Activated CD8-positive, alpha-beta memory T cell treated with anti-CD3 and anti-CD28 coated beads, Interleukin-2, amount 10 ng/mL, durations not matched to agents 7 days and 5 days (primary cell): ENCODE measurements at regions of chr2 and their contacts with region 1.

Region 1: DNA sequence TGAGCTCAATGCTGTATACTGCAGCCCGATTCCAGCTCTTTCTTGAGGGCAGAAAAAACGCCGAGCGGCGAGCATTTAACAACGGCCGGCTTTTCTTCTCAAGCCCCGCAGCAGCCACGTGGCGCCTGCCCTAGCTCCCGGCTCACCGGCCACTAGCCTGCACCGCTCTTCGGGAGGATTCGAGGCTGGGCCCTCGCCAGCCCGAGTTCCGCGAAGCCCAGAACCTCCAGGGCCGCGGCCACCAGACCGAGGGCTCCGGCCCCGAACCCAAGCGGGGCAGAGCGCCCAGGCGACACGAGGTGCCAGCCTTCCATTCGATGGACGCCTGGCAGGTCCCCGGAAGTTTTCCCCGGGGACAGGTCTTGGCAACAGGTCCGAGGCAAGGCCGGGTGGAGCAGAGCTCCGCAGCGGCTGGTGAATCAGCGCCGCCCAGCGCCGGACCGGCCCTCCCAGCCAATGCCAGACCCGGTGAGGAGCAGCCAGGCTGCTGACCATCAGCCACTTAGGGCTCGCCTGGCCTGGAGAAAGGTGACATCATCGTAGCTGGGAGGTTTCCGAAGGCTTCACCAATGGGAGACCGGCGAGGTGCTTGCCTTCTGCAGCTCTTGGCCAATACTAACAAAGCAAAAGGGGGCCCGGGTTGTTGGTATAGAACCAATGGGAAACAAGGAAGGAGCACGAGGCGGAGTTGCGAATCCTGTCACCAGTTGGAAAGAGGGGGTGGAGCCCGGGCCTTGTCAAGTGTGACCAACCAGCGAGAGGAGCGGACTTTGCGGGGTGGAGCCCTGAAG is 544 bp upstream of the MXD1 start:
- DNase-seq: peak; percentile 100
- ATAC-seq: peak; percentile 91
- H3K4me3 Mint-ChIP-seq: peak overlapping the region; percentile 78
- H3K27ac Mint-ChIP-seq: peak overlapping the region; percentile 86
- H3K4me1 Mint-ChIP-seq: peaks cover 38% of the 10 kb centered on the region
- H3K27me3 Mint-ChIP-seq: no peaks in the 10 kb centered on the region

Region 2: GRCh38 chr2:69816923-69817542 is 97.3 kb before region 1 on chr2:
- CTCF ChIA-PET with region 1: no interaction called
- DNase-seq: peak; percentile 89
- ATAC-seq: peak; percentile 80
- H3K4me3 Mint-ChIP-seq: no peak overlapping the region
- H3K27ac Mint-ChIP-seq: peak overlapping the region; percentile 17
- H3K4me1 Mint-ChIP-seq: peaks cover 10% of the 10 kb centered on the region
- H3K27me3 Mint-ChIP-seq: no peaks in the 10 kb centered on the region

Region 3: GRCh38 chr2:69902213-69902922 is 12.0 kb before region 1 on chr2:
- CTCF ChIA-PET with region 1: interaction called, 11 read pairs
- DNase-seq: peak; percentile 43
- ATAC-seq: peak; percentile 56
- H3K4me3 Mint-ChIP-seq: peak overlapping the region; percentile 92
- H3K27ac Mint-ChIP-seq: peak overlapping the region; percentile 90
- H3K4me1 Mint-ChIP-seq: peaks cover 47% of the 10 kb centered on the region
- H3K27me3 Mint-ChIP-seq: no peaks in the 10 kb centered on the region

Region 4: DNA sequence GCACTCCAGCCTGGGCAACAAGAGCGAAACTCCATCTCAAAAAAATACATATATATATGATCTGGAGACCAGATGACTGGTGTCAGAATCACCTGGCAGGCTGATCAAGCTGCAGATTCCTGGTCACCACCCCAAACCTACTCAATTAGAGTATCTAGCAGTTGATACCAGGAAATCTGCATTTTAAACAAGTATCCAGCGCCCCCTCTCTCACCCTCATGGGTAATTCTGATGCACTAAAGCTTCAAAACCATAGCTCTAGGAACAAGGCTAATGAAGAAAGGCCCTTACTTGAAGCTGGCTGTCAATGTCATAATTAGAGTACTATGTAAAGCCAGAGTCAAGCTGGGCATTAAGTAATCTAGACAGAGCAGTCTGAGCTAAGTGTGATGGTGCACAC is 147.9 kb after region 1 on chr2:
- CTCF ChIA-PET with region 1: interaction called, 135 read pairs
- DNase-seq: peak; percentile 52
- ATAC-seq: peak; percentile 49
- H3K4me3 Mint-ChIP-seq: no peak overlapping the region
- H3K27ac Mint-ChIP-seq: peak overlapping the region; percentile 60
- H3K4me1 Mint-ChIP-seq: peaks cover 14% of the 10 kb centered on the region
- H3K27me3 Mint-ChIP-seq: no peaks in the 10 kb centered on the region

Region 5: GRCh38 chr2:70070541-70071268 is 156.3 kb after region 1 on chr2:
- CTCF ChIA-PET with region 1: interaction called, 135 read pairs
- DNase-seq: peak; percentile 83
- ATAC-seq: peak; percentile 77
- H3K4me3 Mint-ChIP-seq: peak overlapping the region; percentile 68
- H3K27ac Mint-ChIP-seq: peak overlapping the region; percentile 96
- H3K4me1 Mint-ChIP-seq: peaks cover 46% of the 10 kb centered on the region
- H3K27me3 Mint-ChIP-seq: no peaks in the 10 kb centered on the region

Region 6: DNA sequence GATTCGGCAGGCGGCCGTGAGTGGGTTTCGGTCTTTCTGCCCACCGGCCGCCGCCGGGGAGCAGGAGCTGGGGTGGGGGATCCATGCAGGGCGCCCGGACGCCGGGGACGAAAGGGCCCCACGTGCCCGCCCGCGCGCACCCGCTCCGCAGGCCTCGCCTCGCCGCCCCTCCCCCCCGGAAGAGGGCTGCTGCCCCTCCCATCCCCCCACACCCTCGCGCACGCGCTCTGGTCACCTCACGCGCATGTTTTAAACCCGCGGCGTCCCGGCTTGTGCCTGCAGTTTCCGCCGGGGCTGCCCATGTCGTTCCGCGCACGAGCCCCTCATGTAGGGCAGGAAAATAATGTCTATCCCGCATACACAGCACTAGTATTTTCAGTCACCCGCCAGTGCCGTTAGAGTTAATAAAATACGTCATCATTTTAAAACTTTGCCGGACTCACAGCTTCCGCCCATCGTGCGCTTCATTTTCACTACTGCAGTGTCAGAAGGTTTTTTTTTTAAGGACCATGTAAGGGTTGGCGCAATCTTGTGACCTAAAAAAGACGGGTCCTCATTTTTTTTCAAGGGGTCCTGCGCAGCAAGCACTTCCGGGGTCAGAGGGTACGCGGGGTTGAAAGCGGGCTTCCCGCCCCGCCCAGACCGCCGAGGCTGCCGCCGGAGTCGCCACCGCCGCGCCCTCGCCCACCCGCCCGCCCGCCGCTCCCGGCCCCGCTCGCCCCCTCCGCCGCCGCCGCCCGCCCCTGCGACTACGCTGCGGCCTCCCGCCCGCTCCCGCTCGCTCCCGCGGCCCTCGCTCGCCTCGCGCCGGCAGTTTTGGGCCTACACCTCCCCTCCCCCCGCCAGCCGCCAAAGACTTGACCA is 172.7 kb after region 1 on chr2 and contains the start of gene PCBP1:
- CTCF ChIA-PET with region 1: interaction called, 26 read pairs
- DNase-seq: peak; percentile 96
- ATAC-seq: peak; percentile 55
- H3K4me3 Mint-ChIP-seq: peak within 1 kb of the TSS; percentile 100
- H3K27ac Mint-ChIP-seq: peak within 1 kb of the TSS; percentile 99
- H3K4me1 Mint-ChIP-seq: peaks cover 56% of the 10 kb centered on the region
- H3K27me3 Mint-ChIP-seq: no peaks in the 10 kb centered on the region
- total RNA-seq, gene PCBP1: 429 to 464 TPM

Region 7: GRCh38 chr2:70132244-70133126 is 218.1 kb after region 1 on chr2:
- CTCF ChIA-PET with region 1: interaction called, 85 read pairs
- DNase-seq: peak; percentile 68
- ATAC-seq: peak; percentile 54
- H3K4me3 Mint-ChIP-seq: peak overlapping the region; percentile 80
- H3K27ac Mint-ChIP-seq: peak overlapping the region; percentile 100
- H3K4me1 Mint-ChIP-seq: peaks cover 75% of the 10 kb centered on the region
- H3K27me3 Mint-ChIP-seq: no peaks in the 10 kb centered on the region